Caco-2 (cell line): ENCODE measurements at regions of chr7 and their contacts with region 1.

Region 1: DNA sequence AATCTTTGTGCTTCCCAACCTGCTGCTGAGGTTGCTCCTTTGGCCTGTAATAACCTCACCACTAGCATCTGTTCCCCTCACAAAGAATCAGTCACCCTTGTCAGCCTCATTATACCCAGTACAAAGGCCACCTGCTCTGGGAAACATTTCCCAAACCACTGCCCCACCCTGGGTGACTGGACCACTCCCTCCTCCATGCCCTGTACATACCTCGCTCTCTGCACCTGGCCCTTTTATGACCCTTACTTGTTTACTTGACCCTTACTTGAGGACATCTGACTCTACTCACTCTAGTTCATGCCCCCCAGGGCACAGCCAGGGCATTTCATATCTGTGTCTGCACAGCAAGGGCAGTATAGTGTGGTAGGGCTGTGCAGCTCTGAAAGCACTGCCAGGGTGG is 21.4 kb upstream of the AOC1 start:
- DNase-seq: peak; percentile 84 to 92
- H3K4me3 ChIP-seq: no peak overlapping the region
- H3K4me3 Mint-ChIP-seq: peak overlapping the region; percentile 30
- H3K27ac Mint-ChIP-seq: peak overlapping the region; percentile 51
- H3K4me1 ChIP-seq: peaks cover 20% of the 10 kb centered on the region
- H3K4me1 Mint-ChIP-seq: peaks cover 20% of the 10 kb centered on the region
- H3K27me3 ChIP-seq: no peaks in the 10 kb centered on the region
- H3K27me3 Mint-ChIP-seq: no peaks in the 10 kb centered on the region
- CTCF ChIP-seq: no peak

Region 2: DNA sequence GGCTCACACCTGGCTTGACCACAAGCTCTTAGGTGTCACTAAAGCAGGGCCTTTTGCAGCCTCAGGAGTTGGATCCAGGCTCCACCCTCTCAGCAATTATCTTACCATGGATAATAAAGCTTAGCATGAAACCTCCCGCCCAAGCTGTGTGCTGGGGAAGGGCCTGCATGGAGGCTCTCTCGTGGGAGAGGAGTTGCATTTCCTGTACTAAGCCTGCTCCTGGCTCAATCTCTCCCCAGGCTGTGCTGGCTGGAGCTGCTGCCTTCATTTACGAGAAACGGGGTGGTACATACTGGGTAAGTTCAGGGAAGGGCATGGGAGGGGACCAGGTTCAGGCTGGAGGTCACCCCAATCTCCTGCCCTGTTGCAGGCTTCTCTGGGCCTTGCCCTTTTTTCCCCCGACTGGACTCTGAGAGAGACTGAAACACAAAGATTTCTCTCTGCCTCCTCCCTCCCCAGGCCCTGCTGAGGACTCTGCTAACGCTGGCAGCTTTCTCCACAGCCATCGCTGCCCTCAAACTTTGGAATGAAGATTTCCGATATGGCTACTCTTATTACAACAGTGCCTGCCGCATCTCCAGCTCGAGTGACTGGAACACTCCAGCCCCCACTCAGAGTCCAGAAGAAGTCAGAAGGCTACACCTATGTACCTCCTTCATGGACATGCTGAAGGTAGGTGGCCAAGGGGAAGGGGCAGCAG is 27.6 kb before region 1 on chr7:
- CTCF ChIA-PET with region 1: no interaction called
- POLR2A ChIA-PET with region 1: no interaction called
- intact Hi-C with region 1: loop called (anchors 1 kb)
- DNase-seq: no peak
- H3K4me3 ChIP-seq: no peak overlapping the region
- H3K4me3 Mint-ChIP-seq: no peak overlapping the region
- H3K27ac Mint-ChIP-seq: no peak overlapping the region
- H3K4me1 ChIP-seq: peaks cover 20% of the 10 kb centered on the region
- H3K4me1 Mint-ChIP-seq: peaks cover 3% of the 10 kb centered on the region
- H3K27me3 ChIP-seq: no peaks in the 10 kb centered on the region
- H3K27me3 Mint-ChIP-seq: peaks cover 5% of the 10 kb centered on the region
- CTCF ChIP-seq: no peak

Region 3: GRCh38 chr7:150876817-150877526 is 46.0 kb after region 1 on chr7:
- CTCF ChIA-PET with region 1: no interaction called
- POLR2A ChIA-PET with region 1: no interaction called
- intact Hi-C with region 1: loop called (anchors 2 kb)
- DNase-seq: peak; percentile 82 to 83
- H3K4me3 ChIP-seq: peak overlapping the region; percentile 29
- H3K4me3 Mint-ChIP-seq: peak overlapping the region; percentile 80
- H3K27ac Mint-ChIP-seq: peak overlapping the region; percentile 77
- H3K4me1 ChIP-seq: peaks cover 8% of the 10 kb centered on the region
- H3K4me1 Mint-ChIP-seq: no peaks in the 10 kb centered on the region
- H3K27me3 ChIP-seq: no peaks in the 10 kb centered on the region
- H3K27me3 Mint-ChIP-seq: peaks cover 9% of the 10 kb centered on the region
- CTCF ChIP-seq: peak; percentile 61 to 79

Region 4: GRCh38 chr7:151017953-151018420 is 187.1 kb after region 1 on chr7:
- CTCF ChIA-PET with region 1: no interaction called
- POLR2A ChIA-PET with region 1: no interaction called
- intact Hi-C with region 1: no loop called
- DNase-seq: peak; percentile 74 to 89
- H3K4me3 ChIP-seq: peak overlapping the region; percentile 33
- H3K4me3 Mint-ChIP-seq: peak overlapping the region; percentile 77
- H3K27ac Mint-ChIP-seq: peak overlapping the region; percentile 80
- H3K4me1 ChIP-seq: peaks cover 26% of the 10 kb centered on the region
- H3K4me1 Mint-ChIP-seq: peaks cover 12% of the 10 kb centered on the region
- H3K27me3 ChIP-seq: no peaks in the 10 kb centered on the region
- H3K27me3 Mint-ChIP-seq: peaks cover 6% of the 10 kb centered on the region
- CTCF ChIP-seq: peak; percentile 91 to 98